ENCODE measurements at regions of chr2 and their contacts with region 1.

Region 1: DNA sequence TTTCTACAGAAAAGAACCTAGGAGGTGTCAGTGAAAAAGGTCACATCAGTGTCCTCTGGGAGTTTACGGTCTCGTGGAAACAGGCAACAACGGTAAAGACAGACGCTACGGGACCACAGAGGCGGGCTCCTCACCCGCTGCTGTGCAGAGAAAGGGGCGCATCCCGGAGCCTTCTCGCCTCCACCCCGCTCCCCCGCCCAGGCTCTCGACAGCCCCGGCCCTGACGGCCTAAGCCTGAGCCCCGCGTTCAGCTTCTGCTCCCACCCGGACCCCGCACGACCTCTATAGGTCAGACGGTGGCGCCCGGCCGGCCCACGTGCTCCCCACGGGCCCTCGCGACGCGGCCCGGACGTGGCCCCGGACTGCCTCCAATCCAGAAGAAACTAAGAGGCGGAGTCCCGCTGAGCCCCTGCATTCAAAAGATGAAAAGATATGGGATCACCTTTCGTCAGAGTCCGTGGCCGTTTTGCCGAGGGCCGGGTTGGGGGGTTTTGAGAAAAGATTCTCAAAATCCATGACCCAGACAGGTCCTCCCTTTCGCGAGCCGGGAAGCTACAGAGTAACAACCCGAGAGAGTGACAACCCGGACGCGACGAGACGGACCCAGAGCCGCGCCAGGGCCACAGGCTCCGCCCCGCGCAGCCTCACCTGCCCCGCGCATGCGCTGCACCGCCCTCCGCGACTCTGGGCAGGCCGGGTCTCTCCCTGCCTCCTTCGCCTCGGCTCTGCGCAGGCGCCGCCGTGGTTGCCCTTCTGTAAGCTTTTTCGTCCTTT is at the start of gene ZC3H8:
- DNase-seq: peak; percentile 99
- H3K4me3 Mint-ChIP-seq: peak within 1 kb of the TSS; percentile 82
- H3K27ac Mint-ChIP-seq: peak within 1 kb of the TSS; percentile 93
- H3K4me1 Mint-ChIP-seq: peaks cover 24% of the 10 kb centered on the region
- H3K27me3 Mint-ChIP-seq: no peaks in the 10 kb centered on the region
- total RNA-seq, gene ZC3H8: 34.5 and 41.4 TPM in 2 replicates

Region 2: GRCh38 chr2:111883661-111884591 is 370.7 kb before region 1 on chr2 and contains the start of gene ANAPC1:
- intact Hi-C with region 1: loop called (anchors 5 kb)
- DNase-seq: peak; percentile 96
- H3K4me3 Mint-ChIP-seq: peak within 1 kb of the TSS; percentile 93
- H3K27ac Mint-ChIP-seq: peak within 1 kb of the TSS; percentile 93
- H3K4me1 Mint-ChIP-seq: peaks cover 12% of the 10 kb centered on the region
- H3K27me3 Mint-ChIP-seq: no peaks in the 10 kb centered on the region
- total RNA-seq, gene ANAPC1: 129 and 133 TPM in 2 replicates

Region 3: GRCh38 chr2:112121682-112122254 is 132.9 kb before region 1 on chr2:
- intact Hi-C with region 1: loop called (anchors 2 kb)
- DNase-seq: peak; percentile 86
- H3K4me3 Mint-ChIP-seq: no peak overlapping the region
- H3K27ac Mint-ChIP-seq: no peak overlapping the region
- H3K4me1 Mint-ChIP-seq: peaks cover 5% of the 10 kb centered on the region
- H3K27me3 Mint-ChIP-seq: no peaks in the 10 kb centered on the region

Region 4: DNA sequence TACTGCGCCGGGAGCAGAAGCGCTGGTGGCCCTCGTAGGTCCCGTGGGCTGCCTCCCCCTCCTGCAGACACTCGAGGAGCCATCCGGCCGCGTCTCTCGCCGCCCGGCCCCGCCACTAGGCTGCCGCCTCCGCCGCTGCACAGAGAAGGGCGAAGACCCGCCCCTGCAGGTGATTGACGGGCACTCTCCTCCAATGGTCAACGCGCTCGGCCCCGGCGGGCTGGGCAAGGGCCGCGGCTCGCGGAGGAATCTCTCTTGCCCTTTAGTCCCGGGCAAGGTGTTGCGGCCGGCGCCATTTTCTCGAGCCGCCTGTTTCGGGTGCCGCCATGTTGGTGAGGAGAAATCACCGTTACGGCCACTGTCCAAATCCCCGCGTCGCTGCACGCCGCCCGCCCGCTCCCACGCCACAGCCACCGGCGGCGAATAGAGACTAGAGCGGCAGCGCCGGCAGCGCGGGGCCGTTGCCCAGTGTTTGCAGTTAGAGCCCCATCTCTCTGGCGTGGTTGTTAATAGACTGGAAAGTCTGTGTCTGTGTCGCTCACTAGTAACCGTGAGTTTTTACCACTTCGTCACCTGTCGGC is 20.7 kb after region 1 on chr2 and contains the start of gene ZC3H6:
- intact Hi-C with region 1: loop called (anchors 1 kb)
- DNase-seq: peak; percentile 100
- H3K4me3 Mint-ChIP-seq: peak within 1 kb of the TSS; percentile 92
- H3K27ac Mint-ChIP-seq: peak within 1 kb of the TSS; percentile 99
- H3K4me1 Mint-ChIP-seq: peaks cover 8% of the 10 kb centered on the region
- H3K27me3 Mint-ChIP-seq: no peaks in the 10 kb centered on the region
- total RNA-seq, gene ZC3H6: 4.9 and 6.2 TPM in 2 replicates

Region 5: DNA sequence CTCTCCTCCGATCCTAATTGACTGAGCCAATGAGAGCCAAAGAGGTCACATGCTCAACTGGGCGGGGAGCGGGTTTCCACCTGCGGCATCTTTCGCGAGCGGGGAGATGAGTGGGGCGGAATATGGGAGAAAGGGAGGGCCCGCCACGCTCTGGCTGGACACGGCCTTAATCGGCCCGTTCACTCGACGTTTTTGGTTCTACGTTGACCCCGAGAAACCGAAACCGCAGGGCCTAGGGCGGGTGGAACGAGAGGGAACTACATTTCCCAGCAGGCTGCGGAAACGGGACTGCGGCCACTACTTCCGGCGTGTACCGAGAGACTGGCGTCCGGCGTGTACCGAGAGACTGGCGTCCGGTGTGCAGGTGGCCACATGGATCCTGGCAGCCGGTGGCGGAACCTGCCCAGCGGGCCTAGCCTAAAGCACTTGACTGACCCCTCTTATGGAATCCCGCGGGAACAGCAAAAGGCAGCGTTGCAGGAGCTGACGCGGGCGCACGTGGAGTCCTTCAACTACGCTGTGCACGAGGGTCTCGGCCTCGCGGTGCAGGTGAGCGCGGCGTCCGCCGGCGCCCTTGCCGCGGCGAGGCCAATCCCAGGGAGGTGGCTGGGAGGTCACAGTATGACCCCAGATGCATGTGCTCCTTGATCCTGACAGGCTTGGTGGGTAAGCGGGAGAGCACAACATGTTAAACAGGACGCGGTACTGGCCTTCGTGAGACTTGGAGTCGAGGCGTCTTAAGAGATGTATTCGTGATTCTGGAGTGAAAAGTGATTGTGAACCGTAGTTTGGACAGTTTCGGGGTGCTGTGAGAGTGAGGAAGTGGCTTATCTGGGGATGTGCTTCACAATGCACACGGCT is 287.7 kb after region 1 on chr2 and contains the start of gene POLR1B:
- intact Hi-C with region 1: loop called (anchors 10 kb)
- DNase-seq: peak; percentile 94
- H3K4me3 Mint-ChIP-seq: no peak within 1 kb of the TSS
- H3K27ac Mint-ChIP-seq: no peak within 1 kb of the TSS
- H3K4me1 Mint-ChIP-seq: peaks cover 9% of the 10 kb centered on the region
- H3K27me3 Mint-ChIP-seq: no peaks in the 10 kb centered on the region
- total RNA-seq, gene POLR1B: 71.9 and 84.5 TPM in 2 replicates

Region 6: GRCh38 chr2:113173542-113174395 is 919.1 kb after region 1 on chr2 and contains the start of gene PSD4:
- intact Hi-C with region 1: loop called (anchors 10 kb)
- DNase-seq: peak; percentile 96
- H3K4me3 Mint-ChIP-seq: peak within 1 kb of the TSS; percentile 88
- H3K27ac Mint-ChIP-seq: peak within 1 kb of the TSS; percentile 92
- H3K4me1 Mint-ChIP-seq: peaks cover 66% of the 10 kb centered on the region
- H3K27me3 Mint-ChIP-seq: no peaks in the 10 kb centered on the region
- total RNA-seq, gene PSD4: 268 and 278 TPM in 2 replicates